Activated CD8-positive, alpha-beta T cell treated with anti-CD3 and anti-CD28 coated beads, Interleukin-2, amount 10 ng/mL, durations not matched to agents 7 days and 5 days (primary cell): ENCODE measurements at regions of chr5 and their contacts with region 1.

Region 1: GRCh38 chr5:134904630-134905245 is at the start of gene PCBD2:
- DNase-seq: peak; percentile 94
- ATAC-seq: peak; percentile 88
- H3K4me3 Mint-ChIP-seq: peak within 1 kb of the TSS; percentile 94
- H3K27ac Mint-ChIP-seq: peak within 1 kb of the TSS; percentile 98
- H3K4me1 Mint-ChIP-seq: peaks cover 27% of the 10 kb centered on the region
- H3K27me3 Mint-ChIP-seq: no peaks in the 10 kb centered on the region
- total RNA-seq, gene PCBD2: 11.3 to 14.4 TPM

Region 2: DNA sequence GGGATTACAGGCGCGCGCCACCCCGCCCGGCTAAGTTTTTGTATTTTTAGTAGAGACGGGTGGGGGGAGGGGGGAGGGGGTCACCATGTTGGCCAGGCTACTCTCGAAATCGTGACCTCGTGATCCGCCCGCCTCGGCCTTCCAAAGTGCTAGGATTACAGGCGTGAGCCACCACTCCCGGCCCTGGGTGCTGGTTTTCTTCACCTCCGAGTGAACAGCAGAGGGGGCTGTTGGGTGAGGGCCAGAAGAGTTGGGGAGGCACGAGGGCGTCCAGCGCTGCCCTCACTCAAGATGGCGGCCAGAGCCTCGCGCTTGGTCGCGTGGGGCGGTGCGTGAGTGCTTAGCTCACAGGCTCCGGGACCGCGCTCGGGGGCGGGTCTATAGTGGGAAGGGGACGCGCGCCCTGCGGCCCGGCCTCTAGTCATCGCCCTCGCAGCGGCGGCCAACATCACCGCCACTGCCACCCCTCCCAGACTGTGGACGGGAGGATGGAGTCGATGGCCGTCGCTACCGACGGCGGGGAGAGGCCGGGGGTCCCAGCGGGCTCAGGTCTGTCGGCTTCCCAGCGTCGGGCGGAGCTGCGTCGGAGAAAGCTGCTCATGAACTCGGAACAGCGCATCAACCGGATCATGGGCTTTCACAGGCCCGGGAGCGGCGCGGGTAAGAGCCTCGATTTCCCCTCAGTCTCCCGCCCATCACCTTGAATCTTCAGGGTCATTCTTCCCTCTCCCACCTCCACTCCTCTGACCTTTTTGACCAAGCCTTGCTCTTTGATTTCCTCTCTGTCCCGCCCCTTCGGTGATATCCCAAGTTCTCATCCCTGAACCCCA is 166.4 kb before region 1 on chr5 and contains the start of gene CAMLG:
- CTCF ChIA-PET with region 1: interaction called, 13 read pairs
- POLR2A ChIA-PET with region 1: interaction called, 14 read pairs
- DNase-seq: peak; percentile 98
- ATAC-seq: peak; percentile 99
- H3K4me3 Mint-ChIP-seq: peak within 1 kb of the TSS; percentile 84
- H3K27ac Mint-ChIP-seq: peak within 1 kb of the TSS; percentile 93
- H3K4me1 Mint-ChIP-seq: peaks cover 30% of the 10 kb centered on the region
- H3K27me3 Mint-ChIP-seq: no peaks in the 10 kb centered on the region
- total RNA-seq, gene CAMLG: 23.1 TPM

Region 3: GRCh38 chr5:134845852-134846640 is 58.7 kb before region 1 on chr5 and contains the start of gene C5orf24:
- CTCF ChIA-PET with region 1: interaction called, 21 read pairs
- POLR2A ChIA-PET with region 1: interaction called, 19 read pairs
- DNase-seq: peak; percentile 95
- ATAC-seq: peak; percentile 95
- H3K4me3 Mint-ChIP-seq: peak within 1 kb of the TSS; percentile 93
- H3K27ac Mint-ChIP-seq: peak within 1 kb of the TSS; percentile 96
- H3K4me1 Mint-ChIP-seq: peaks cover 33% of the 10 kb centered on the region
- H3K27me3 Mint-ChIP-seq: no peaks in the 10 kb centered on the region
- total RNA-seq, gene C5orf24: 25.8 to 30.5 TPM

Region 4: GRCh38 chr5:134864707-134865106 is 40.0 kb before region 1 on chr5:
- CTCF ChIA-PET with region 1: interaction called, 10 read pairs
- POLR2A ChIA-PET with region 1: interaction called, 7 read pairs
- DNase-seq: no peak
- ATAC-seq: no peak
- H3K4me3 Mint-ChIP-seq: no peak overlapping the region
- H3K27ac Mint-ChIP-seq: no peak overlapping the region
- H3K4me1 Mint-ChIP-seq: no peaks in the 10 kb centered on the region
- H3K27me3 Mint-ChIP-seq: no peaks in the 10 kb centered on the region

Region 5: GRCh38 chr5:134917070-134917815 is 12.5 kb after region 1 on chr5:
- CTCF ChIA-PET with region 1: interaction called, 38 read pairs
- POLR2A ChIA-PET with region 1: interaction called, 11 read pairs
- DNase-seq: no peak
- ATAC-seq: no peak
- H3K4me3 Mint-ChIP-seq: no peak overlapping the region
- H3K27ac Mint-ChIP-seq: no peak overlapping the region
- H3K4me1 Mint-ChIP-seq: peaks cover 12% of the 10 kb centered on the region
- H3K27me3 Mint-ChIP-seq: no peaks in the 10 kb centered on the region

Region 6: DNA sequence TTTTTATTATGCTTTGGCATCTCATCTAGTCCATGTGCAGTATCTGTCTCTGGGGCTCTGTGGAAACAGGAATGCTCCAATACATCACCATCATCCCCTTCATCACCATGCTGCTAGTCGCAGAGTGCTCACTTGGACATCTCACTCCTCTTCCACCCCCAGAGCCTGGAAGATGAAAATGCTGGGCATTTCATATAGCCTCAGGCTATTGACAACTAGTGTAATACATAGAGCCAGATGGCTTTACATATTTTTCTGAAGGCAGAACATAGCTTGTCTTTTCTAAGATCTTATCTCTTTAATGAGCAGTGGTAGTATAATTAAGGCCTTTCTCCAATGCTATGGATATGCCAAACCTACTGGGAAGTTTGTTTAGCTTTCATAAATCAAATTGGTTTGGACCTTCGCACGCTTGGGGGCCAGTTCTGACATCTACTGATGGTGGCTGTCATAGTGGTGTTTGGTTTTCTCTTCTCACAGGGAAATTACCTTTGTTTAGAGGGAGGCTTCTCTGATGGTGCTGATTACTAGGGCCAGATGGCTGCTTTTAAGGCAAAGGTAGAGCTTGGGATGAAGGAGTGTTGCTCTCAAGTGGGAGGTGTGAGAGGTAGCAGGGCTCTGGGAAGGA is 737.1 kb after region 1 on chr5:
- CTCF ChIA-PET with region 1: no interaction called
- POLR2A ChIA-PET with region 1: no interaction called
- DNase-seq: no peak
- ATAC-seq: no peak
- H3K4me3 Mint-ChIP-seq: no peak overlapping the region
- H3K27ac Mint-ChIP-seq: no peak overlapping the region
- H3K4me1 Mint-ChIP-seq: no peaks in the 10 kb centered on the region
- H3K27me3 Mint-ChIP-seq: peaks cover 10% of the 10 kb centered on the region